SK-N-SH (cell line): ENCODE measurements at regions of chr17 and their contacts with region 1.

Region 1: DNA sequence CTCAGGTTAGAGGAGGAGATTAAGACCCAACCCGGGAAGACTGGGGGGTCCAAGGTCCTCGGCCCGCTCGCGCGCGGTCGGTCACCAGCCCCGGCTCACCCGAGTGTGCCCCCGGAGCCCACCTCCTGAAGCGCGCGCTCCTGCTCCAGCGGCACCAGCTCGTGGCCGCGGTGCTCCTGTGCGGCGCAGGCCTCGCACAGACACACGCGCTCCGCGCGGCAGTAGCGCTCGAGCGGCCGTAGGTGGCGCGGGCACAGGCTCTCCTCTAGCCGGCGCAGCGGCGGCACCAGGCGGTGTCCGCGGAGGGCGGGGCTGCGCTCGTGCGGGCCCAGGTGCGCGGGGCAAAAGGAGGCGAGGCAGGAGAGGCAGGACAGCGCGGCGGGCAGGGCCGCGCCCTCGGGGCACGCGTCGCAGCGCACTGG is 618 bp downstream of the TRIM47 start:
- DNase-seq: peak; percentile 93
- H3K4me3 ChIP-seq: peak overlapping the region; percentile 34 to 49
- H3K27ac ChIP-seq: peak overlapping the region in 1 of 2 experiments; percentile 87; a peak in 1 of 4 replicates
- H3K4me1 ChIP-seq: peaks cover 27 to 32% of the 10 kb centered on the region in 2 experiments; a peak in 3 of 4 replicates
- H3K27me3 ChIP-seq: no peaks in the 10 kb centered on the region
- CTCF ChIP-seq: peak; percentile 15; the same call in 1 of the 2 replicates
- EP300 ChIP-seq: no peak
- RAD21 ChIP-seq: peak; percentile 34; the same call in 1 of the 2 replicates

Region 2: DNA sequence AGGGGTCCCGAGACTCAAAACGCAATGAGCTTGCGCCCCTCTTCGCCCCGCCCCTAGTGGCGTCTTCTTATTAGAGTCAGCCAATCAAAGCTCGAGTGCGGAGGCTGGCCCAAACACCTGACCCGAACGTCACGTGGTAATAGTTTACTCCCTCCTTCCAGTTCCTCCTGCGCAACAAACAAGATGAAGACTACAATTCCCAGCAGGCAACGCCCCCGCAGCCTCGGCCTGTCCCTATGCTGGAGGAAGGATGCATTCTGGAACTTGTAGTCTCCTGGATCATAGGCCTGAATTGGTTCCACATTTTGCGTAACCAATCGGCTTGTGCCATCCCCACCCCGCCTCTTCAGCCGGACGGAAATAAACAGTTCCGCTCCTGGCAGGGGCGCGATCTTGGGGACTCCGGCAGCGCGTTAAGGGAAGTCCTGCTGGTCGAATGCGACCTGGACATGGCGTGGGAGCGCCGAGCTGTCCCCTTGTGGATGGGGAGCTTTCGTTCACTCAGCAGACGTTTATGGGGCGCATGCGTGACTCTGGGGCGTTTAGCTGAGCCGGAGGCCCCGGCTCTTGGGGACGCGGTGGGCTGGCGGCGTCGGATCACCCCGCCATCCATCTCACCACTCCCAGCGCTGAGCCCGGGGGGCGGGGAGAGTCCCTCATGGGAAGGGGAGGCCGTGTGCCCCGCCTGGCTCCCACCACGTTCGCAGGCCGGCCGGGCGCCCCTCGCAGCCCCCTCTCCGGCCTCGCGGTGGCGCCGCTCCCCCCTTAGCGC is 22.3 kb before region 1 on chr17 and contains the start of gene WBP2:
- CTCF ChIA-PET with region 1: interaction called, 48 read pairs
- POLR2A ChIA-PET with region 1: interaction called, 9 read pairs
- DNase-seq: peak; percentile 97
- H3K4me3 ChIP-seq: peak within 1 kb of the TSS; percentile 72 to 83
- H3K27ac ChIP-seq: peak within 1 kb of the TSS; percentile 86 to 88
- H3K4me1 ChIP-seq: peaks cover 12 to 19% of the 10 kb centered on the region in 2 experiments; a peak in 3 of 4 replicates
- H3K27me3 ChIP-seq: no peaks in the 10 kb centered on the region
- CTCF ChIP-seq: peak; percentile 70
- EP300 ChIP-seq: no peak
- RAD21 ChIP-seq: no peak; the same call in none of the 2 replicates
- polyA plus RNA-seq, gene WBP2: 49.7 and 55.8 TPM in 2 replicates

Region 3: GRCh38 chr17:75864448-75864871 is 13.3 kb before region 1 on chr17:
- CTCF ChIA-PET with region 1: interaction called, 42 read pairs
- POLR2A ChIA-PET with region 1: interaction called, 4 read pairs
- DNase-seq: peak; percentile 35
- H3K4me3 ChIP-seq: no peak overlapping the region
- H3K27ac ChIP-seq: no peak overlapping the region
- H3K4me1 ChIP-seq: no peaks in the 10 kb centered on the region; a peak in 1 of 4 replicates
- H3K27me3 ChIP-seq: no peaks in the 10 kb centered on the region
- CTCF ChIP-seq: no peak
- EP300 ChIP-seq: no peak
- RAD21 ChIP-seq: no peak

Region 4: GRCh38 chr17:75896415-75897159 is 18.8 kb after region 1 on chr17 and contains the start of gene TRIM65:
- CTCF ChIA-PET with region 1: interaction called, 214 read pairs
- POLR2A ChIA-PET with region 1: interaction called, 6 read pairs
- DNase-seq: peak; percentile 98
- H3K4me3 ChIP-seq: peak within 1 kb of the TSS; percentile 73 to 76
- H3K27ac ChIP-seq: peak within 1 kb of the TSS; percentile 69 to 91
- H3K4me1 ChIP-seq: peaks cover 9 to 13% of the 10 kb centered on the region in 2 experiments; a peak in 3 of 4 replicates
- H3K27me3 ChIP-seq: no peaks in the 10 kb centered on the region
- CTCF ChIP-seq: peak; percentile 43
- EP300 ChIP-seq: no peak
- RAD21 ChIP-seq: peak; percentile 32
- polyA plus RNA-seq, gene TRIM65: 13.1 and 18.1 TPM in 2 replicates

Region 5: DNA sequence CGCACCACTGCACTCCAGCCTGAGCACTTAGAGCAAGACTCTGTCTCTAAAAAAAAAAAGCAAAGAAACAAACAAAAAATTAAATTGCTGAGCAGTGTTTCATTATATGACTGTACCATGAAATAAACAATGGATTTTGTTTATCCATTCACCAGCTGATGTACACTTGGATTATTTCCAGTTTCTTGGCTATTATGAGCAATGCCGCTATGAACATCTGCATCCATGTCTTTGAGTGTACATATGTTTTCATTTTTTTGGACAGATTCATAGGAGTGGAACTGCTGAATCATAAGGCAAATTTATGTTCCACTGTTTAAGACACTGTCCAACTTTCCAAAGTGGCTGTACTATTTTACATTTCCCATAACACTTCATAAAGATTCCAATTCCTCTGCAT is 354.6 kb after region 1 on chr17:
- CTCF ChIA-PET with region 1: no interaction called
- POLR2A ChIA-PET with region 1: no interaction called
- DNase-seq: no peak
- H3K4me3 ChIP-seq: no peak overlapping the region
- H3K27ac ChIP-seq: no peak overlapping the region
- H3K4me1 ChIP-seq: no peaks in the 10 kb centered on the region
- H3K27me3 ChIP-seq: no peaks in the 10 kb centered on the region
- CTCF ChIP-seq: no peak
- EP300 ChIP-seq: no peak
- RAD21 ChIP-seq: no peak